Heart left ventricle (tissue), 16 donors: ENCODE measurements at regions of chr2 and their contacts with region 1.

Region 1: GRCh38 chr2:111897924-111898702 is at the start of gene MERTK:
- DNase-seq: peak; percentile 90 to 95 (median 91)
- ATAC-seq: peak; percentile 90 to 95 (median 94)
- H3K4me3 ChIP-seq: peak within 1 kb of the TSS; percentile 52 to 98 (median 89)
- H3K27ac ChIP-seq: peak within 1 kb of the TSS; percentile 61 to 95 (median 92)
- H3K4me1 ChIP-seq: peaks cover 0 to 46% (median 20%) of the 10 kb centered on the region in 12 donors
- H3K27me3 ChIP-seq: no peaks in the 10 kb centered on the region
- CTCF ChIP-seq: peak; percentile 32 to 86 (median 67)
- POLR2A ChIP-seq: peak in 1 of 2 donors; percentile 65
- total RNA-seq, gene MERTK: 1.9 to 15.2 (median 4.9) TPM

Region 2: GRCh38 chr2:111715987-111716904 is 181.9 kb before region 1 on chr2:
- intact Hi-C with region 1: no loop called
- DNase-seq: peak in 1 of 5 donors; percentile 46
- ATAC-seq: peak in 3 of 4 donors; percentile 18 to 54 (median 39)
- H3K4me3 ChIP-seq: no peak overlapping the region
- H3K27ac ChIP-seq: no peak overlapping the region
- H3K4me1 ChIP-seq: peaks cover 0 to 12% (median 0%) of the 10 kb centered on the region in 12 donors
- H3K27me3 ChIP-seq: no peaks in the 10 kb centered on the region
- CTCF ChIP-seq: no peak
- POLR2A ChIP-seq: no peak

Region 3: GRCh38 chr2:111958901-111959300 is 60.8 kb after region 1 on chr2:
- intact Hi-C with region 1: loop called in 5 of 10 experiments (anchors 5 to 10 kb)
- DNase-seq: no peak
- ATAC-seq: no peak
- H3K4me3 ChIP-seq: no peak overlapping the region
- H3K27ac ChIP-seq: peak overlapping the region in 8 of 12 donors; percentile 28 to 73 (median 62)
- H3K4me1 ChIP-seq: peaks cover 0 to 46% (median 19%) of the 10 kb centered on the region in 12 donors
- H3K27me3 ChIP-seq: no peaks in the 10 kb centered on the region
- CTCF ChIP-seq: peak in 1 of 12 donors; percentile 30
- POLR2A ChIP-seq: no peak

Region 4: DNA sequence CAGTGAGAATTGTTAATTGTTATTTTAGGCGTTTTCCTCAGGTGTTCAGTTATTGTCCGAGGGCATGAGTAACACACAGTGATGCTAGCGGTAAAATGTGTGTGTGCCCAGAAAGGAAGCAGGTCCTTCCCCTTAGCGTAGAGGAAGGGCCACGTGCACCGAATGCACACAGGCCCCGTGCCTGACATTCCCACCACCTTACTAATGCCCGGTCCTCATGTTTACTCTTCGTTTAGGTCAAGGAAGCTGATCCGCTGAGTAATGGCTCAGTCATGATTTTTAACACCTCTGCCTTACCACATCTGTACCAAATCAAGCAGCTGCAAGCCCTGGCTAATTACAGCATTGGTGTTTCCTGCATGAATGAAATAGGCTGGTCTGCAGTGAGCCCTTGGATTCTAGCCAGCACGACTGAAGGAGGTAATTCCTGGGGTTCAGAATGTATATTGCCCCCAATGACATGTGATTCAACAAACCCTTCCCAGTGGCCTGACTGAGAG is 77.0 kb after region 1 on chr2:
- intact Hi-C with region 1: loop called in 3 of 10 experiments (anchors 5 to 10 kb)
- DNase-seq: no peak
- ATAC-seq: no peak
- H3K4me3 ChIP-seq: no peak overlapping the region
- H3K27ac ChIP-seq: no peak overlapping the region
- H3K4me1 ChIP-seq: peaks cover 0 to 20% (median 14%) of the 10 kb centered on the region in 12 donors
- H3K27me3 ChIP-seq: no peaks in the 10 kb centered on the region
- CTCF ChIP-seq: no peak
- POLR2A ChIP-seq: no peak

Region 5: DNA sequence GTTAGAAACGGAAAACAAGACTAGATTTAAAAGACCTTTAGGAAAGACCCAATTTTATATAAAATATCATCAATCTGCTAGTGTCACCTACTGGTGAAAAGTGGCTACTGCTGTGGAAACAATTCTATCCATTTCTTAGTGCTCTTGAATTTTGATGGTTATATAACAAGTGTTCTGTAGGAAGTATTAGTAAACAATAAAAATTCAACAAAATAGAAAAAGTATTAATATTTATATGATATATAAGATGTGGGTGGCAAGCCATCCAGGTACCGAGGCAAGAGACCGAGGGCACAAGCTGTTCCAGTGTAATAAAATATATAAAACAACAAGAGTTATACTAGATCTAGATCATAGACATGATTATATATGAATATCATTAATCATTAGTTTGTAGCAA is 150.8 kb after region 1 on chr2:
- intact Hi-C with region 1: loop called in 6 of 10 experiments (anchors 2 to 5 kb)
- DNase-seq: no peak
- ATAC-seq: peak; percentile 39 to 78 (median 71)
- H3K4me3 ChIP-seq: no peak overlapping the region
- H3K27ac ChIP-seq: peak overlapping the region in 1 of 12 donors; percentile 27
- H3K4me1 ChIP-seq: peaks cover 0 to 31% (median 14%) of the 10 kb centered on the region in 12 donors
- H3K27me3 ChIP-seq: no peaks in the 10 kb centered on the region
- CTCF ChIP-seq: peak; percentile 78 to 98 (median 84)
- POLR2A ChIP-seq: no peak

Region 6: DNA sequence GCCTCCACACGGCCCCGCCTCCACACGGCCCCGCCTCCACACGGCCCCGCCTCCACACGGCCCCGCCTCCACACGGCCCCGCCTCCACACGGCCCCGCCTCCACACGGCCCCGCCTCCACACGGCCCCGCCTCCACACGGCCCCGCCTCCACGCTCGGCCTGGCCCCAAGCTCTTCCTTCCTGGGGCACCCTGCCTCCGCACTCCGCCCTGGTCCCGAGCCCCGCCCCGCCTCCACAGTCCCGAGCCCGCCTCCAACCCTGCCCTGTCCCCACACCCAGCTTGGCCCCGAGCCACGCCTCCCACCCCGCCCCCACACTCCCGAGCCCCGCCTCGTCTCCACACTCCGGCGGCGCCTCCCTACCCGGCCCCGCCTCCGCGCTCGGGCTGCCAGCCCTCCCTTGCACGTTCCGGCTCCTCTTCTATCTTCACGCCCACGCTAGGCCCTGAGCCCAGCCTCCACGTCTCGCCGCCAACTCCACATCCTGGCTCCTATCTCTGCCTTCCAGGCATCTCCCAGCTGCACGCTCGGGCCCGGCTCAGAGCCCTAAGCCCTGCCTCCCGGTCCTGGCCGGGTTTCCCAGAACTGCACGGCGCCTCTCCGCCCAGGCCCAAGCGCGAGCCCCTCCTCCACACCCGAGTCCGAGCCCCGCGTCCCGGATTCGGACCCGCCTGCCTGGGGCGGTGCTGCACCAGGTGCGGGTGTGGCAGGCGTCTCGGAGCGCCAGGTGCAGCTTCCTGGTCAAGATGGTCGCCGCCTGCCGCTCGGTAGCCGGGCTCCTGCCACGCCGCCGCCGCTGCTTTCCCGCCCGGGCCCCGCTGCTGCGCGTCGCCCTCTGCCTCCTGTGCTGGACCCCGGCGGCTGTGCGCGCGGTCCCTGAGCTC is 157.0 kb after region 1 on chr2 and contains the start of gene TMEM87B:
- intact Hi-C with region 1: loop called in 1 of 10 experiments (anchors 2 kb)
- DNase-seq: peak; percentile 98 to 100 (median 99)
- ATAC-seq: peak; percentile 80 to 87 (median 86)
- H3K4me3 ChIP-seq: peak within 1 kb of the TSS; percentile 65 to 97 (median 88)
- H3K27ac ChIP-seq: peak within 1 kb of the TSS; percentile 91 to 100 (median 98)
- H3K4me1 ChIP-seq: peaks cover 7 to 41% (median 28%) of the 10 kb centered on the region in 12 donors
- H3K27me3 ChIP-seq: no peaks in the 10 kb centered on the region
- CTCF ChIP-seq: no peak
- POLR2A ChIP-seq: peak in 1 of 2 donors; percentile 72
- total RNA-seq, gene TMEM87B: 4.8 to 18.5 (median 7.9) TPM

Region 7: GRCh38 chr2:112242384-112242783 is 344.3 kb after region 1 on chr2:
- intact Hi-C with region 1: loop called in 1 of 10 experiments (anchors 10 kb)
- DNase-seq: no peak
- ATAC-seq: no peak
- H3K4me3 ChIP-seq: no peak overlapping the region
- H3K27ac ChIP-seq: no peak overlapping the region
- H3K4me1 ChIP-seq: no peaks in the 10 kb centered on the region
- H3K27me3 ChIP-seq: no peaks in the 10 kb centered on the region
- CTCF ChIP-seq: no peak
- POLR2A ChIP-seq: no peak

Region 8: GRCh38 chr2:113818382-113818951 is 1920.4 kb after region 1 on chr2:
- intact Hi-C with region 1: no loop called
- DNase-seq: peak in 4 of 5 donors; percentile 18 to 63 (median 42)
- ATAC-seq: peak; percentile 79 to 97 (median 88)
- H3K4me3 ChIP-seq: peak overlapping the region in 8 of 12 donors; percentile 12 to 49 (median 30)
- H3K27ac ChIP-seq: peak overlapping the region; percentile 38 to 84 (median 67)
- H3K4me1 ChIP-seq: peaks cover 0 to 16% (median 2%) of the 10 kb centered on the region in 12 donors
- H3K27me3 ChIP-seq: no peaks in the 10 kb centered on the region
- CTCF ChIP-seq: no peak
- POLR2A ChIP-seq: no peak